ENCODE measurements at regions of chr2 and their contacts with region 1.

Region 1: GRCh38 chr2:134207564-134208209 is 46.2 kb upstream of the MGAT5 start:
- DNase-seq: peak; percentile 58 to 68 (median 64)
- H3K4me3 ChIP-seq: no peak overlapping the region
- H3K4me3 Mint-ChIP-seq: peak overlapping the region in 2 of 8 donors; percentile 4 to 50
- H3K27ac ChIP-seq: no peak overlapping the region
- H3K27ac Mint-ChIP-seq: peak overlapping the region in 5 of 7 donors; percentile 25 to 80 (median 63)
- H3K4me1 ChIP-seq: peaks cover 53% of the 10 kb centered on the region
- H3K4me1 Mint-ChIP-seq: peaks cover 10 to 21% (median 18%) of the 10 kb centered on the region in 4 donors
- H3K27me3 ChIP-seq: no peaks in the 10 kb centered on the region
- H3K27me3 Mint-ChIP-seq: no peaks in the 10 kb centered on the region

Region 2: DNA sequence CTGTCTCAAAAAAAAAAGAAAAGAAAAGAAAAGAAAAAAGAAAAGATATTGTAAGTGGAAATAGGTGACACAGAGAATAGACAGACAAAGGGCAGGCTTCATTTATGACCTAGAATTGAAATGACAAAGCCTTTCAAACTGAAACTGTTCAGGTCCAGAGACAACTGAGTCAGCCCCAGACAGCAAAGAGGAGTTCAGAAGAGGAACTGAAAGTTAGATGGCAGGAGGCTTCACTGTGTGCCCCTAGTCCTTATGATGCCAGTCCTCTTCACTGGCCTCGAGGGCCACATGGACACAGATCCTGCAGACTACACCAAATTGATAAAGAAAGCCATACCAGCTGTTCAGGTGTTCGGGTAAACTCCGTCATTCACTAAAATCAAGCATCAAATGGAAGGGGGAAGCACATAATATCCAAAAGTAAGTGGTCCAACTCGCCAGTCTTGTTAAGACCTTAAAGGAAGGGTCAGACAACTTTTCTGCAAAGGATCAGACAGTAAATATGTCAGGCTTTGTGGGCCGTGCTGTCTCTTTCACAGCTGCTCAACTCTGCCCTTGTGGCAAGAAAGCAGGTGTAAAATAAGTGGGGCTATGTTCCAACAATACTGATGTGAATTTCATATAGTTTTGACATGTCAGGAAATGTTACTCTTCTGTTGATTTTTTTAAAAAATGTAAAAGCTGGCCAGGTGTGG is 185.7 kb before region 1 on chr2:
- CTCF ChIA-PET with region 1: no interaction called
- POLR2A ChIA-PET with region 1: no interaction called
- intact Hi-C with region 1: no loop called
- DNase-seq: no peak
- H3K4me3 ChIP-seq: no peak overlapping the region
- H3K4me3 Mint-ChIP-seq: no peak overlapping the region
- H3K27ac ChIP-seq: no peak overlapping the region
- H3K27ac Mint-ChIP-seq: peak overlapping the region in 2 of 7 donors; percentile 43 to 48
- H3K4me1 ChIP-seq: peaks cover 25% of the 10 kb centered on the region
- H3K4me1 Mint-ChIP-seq: peaks cover 14 to 28% (median 20%) of the 10 kb centered on the region in 4 donors
- H3K27me3 ChIP-seq: no peaks in the 10 kb centered on the region
- H3K27me3 Mint-ChIP-seq: peaks cover 14% of the 10 kb centered on the region in 2 donors

Region 3: DNA sequence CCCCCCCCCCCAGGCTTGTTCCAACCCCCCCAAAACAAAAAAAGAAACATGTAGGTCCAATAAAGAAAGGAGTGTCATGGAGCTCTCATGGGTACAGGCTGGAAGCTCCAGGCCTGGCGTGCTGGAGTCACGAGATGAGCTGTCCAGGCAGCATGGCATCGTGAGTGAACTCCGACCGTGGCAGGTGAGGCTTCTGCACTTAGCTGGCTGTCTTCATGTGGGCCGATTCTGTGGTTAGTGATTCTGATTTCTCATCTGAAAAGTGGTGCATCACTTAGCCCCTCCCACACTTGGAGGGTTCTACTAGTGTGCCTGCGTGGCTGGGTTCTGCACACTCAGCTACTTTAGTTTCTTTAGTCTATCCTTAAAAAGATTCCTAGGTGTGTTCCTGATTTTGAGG is 80.2 kb before region 1 on chr2:
- CTCF ChIA-PET with region 1: interaction called, 358 read pairs
- POLR2A ChIA-PET with region 1: interaction called, 98 read pairs
- intact Hi-C with region 1: no loop called
- DNase-seq: peak; percentile 21 to 59 (median 34)
- H3K4me3 ChIP-seq: no peak overlapping the region
- H3K4me3 Mint-ChIP-seq: peak overlapping the region in 7 of 8 donors; percentile 47 to 82 (median 63)
- H3K27ac ChIP-seq: no peak overlapping the region
- H3K27ac Mint-ChIP-seq: peak overlapping the region; percentile 12 to 85 (median 73)
- H3K4me1 ChIP-seq: peaks cover 82% of the 10 kb centered on the region
- H3K4me1 Mint-ChIP-seq: peaks cover 67 to 92% (median 80%) of the 10 kb centered on the region in 4 donors
- H3K27me3 ChIP-seq: no peaks in the 10 kb centered on the region
- H3K27me3 Mint-ChIP-seq: no peaks in the 10 kb centered on the region

Region 4: GRCh38 chr2:134189009-134189720 is 18.5 kb before region 1 on chr2:
- CTCF ChIA-PET with region 1: interaction called, 13 read pairs
- POLR2A ChIA-PET with region 1: interaction called, 5 read pairs
- intact Hi-C with region 1: no loop called
- DNase-seq: no peak
- H3K4me3 ChIP-seq: no peak overlapping the region
- H3K4me3 Mint-ChIP-seq: peak overlapping the region in 3 of 8 donors; percentile 12 to 24 (median 15)
- H3K27ac ChIP-seq: no peak overlapping the region
- H3K27ac Mint-ChIP-seq: peak overlapping the region in 4 of 7 donors; percentile 3 to 31 (median 12)
- H3K4me1 ChIP-seq: peaks cover 65% of the 10 kb centered on the region
- H3K4me1 Mint-ChIP-seq: peaks cover 60 to 76% (median 69%) of the 10 kb centered on the region in 4 donors
- H3K27me3 ChIP-seq: no peaks in the 10 kb centered on the region
- H3K27me3 Mint-ChIP-seq: no peaks in the 10 kb centered on the region

Region 5: DNA sequence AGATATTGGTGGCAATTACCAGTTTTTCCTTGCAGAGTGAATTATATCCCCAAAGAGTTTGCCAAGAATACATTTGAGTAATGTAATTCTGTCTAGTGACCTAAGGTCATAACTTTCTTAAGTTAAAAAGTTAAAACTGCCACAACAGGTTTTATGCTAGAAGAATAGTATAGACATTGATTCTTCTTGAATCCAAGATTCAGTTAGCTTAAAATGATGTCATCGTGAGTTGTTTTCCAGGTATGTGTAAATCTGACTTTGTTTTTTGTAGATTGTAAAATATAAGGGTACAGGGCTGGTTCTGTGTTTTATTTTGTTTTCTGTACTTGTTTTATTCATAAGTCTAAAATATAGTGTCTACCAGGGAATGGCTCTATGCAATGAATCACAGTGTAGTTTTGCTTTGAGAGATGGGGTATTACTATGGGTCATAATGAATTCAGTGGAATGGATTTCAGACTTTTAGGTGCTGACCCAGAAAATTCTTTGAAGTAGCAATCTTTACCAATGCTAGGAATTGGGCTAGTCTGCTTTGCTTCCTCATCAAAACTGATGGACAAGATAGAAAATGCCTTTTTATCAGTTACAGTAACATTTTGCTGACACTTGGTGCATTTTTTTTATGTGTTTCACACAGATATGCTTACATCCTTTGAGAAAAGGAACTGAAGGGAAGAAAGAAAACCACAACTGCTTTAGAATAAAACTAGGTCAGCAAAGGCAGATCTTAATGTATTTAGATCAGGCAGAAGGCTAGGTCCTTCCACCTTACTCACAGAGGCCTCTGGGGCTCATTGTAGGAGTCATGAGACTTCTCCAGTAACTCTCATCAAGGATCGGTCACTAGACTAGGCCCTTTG is 25.4 kb after region 1 on chr2:
- CTCF ChIA-PET with region 1: interaction called, 29 read pairs
- POLR2A ChIA-PET with region 1: no interaction called
- intact Hi-C with region 1: no loop called
- DNase-seq: peak; percentile 65 to 77 (median 69)
- H3K4me3 ChIP-seq: peak overlapping the region in 1 of 2 donors; percentile 30
- H3K4me3 Mint-ChIP-seq: peak overlapping the region; percentile 56 to 86 (median 78)
- H3K27ac ChIP-seq: peak overlapping the region; percentile 55
- H3K27ac Mint-ChIP-seq: peak overlapping the region; percentile 83 to 97 (median 92)
- H3K4me1 ChIP-seq: peaks cover 94% of the 10 kb centered on the region
- H3K4me1 Mint-ChIP-seq: peaks cover 75 to 94% (median 87%) of the 10 kb centered on the region in 4 donors
- H3K27me3 ChIP-seq: no peaks in the 10 kb centered on the region
- H3K27me3 Mint-ChIP-seq: no peaks in the 10 kb centered on the region